ENCODE measurements at regions of chr1 and their contacts with region 1.

Region 1: GRCh38 chr1:62991152-62991551 is 207.2 kb downstream of the ATG4C start:
- H3K4me3 ChIP-seq: no peak overlapping the region
- H3K27ac ChIP-seq: no peak overlapping the region
- H3K4me1 ChIP-seq: no peaks in the 10 kb centered on the region
- CTCF ChIP-seq: no peak

Region 2: GRCh38 chr1:62977366-62977765 is 13.8 kb before region 1 on chr1:
- CTCF ChIA-PET with region 1: interaction called, 11 read pairs
- POLR2A ChIA-PET with region 1: no interaction called
- H3K4me3 ChIP-seq: no peak overlapping the region
- H3K27ac ChIP-seq: no peak overlapping the region
- H3K4me1 ChIP-seq: no peaks in the 10 kb centered on the region
- CTCF ChIP-seq: no peak

Region 3: GRCh38 chr1:63238721-63239120 is 247.6 kb after region 1 on chr1:
- CTCF ChIA-PET with region 1: no interaction called
- POLR2A ChIA-PET with region 1: no interaction called
- H3K4me3 ChIP-seq: no peak overlapping the region
- H3K27ac ChIP-seq: no peak overlapping the region
- H3K4me1 ChIP-seq: no peaks in the 10 kb centered on the region
- CTCF ChIP-seq: no peak

Measured in HEK293 (cell line).